HepG2 (cell line): ENCODE measurements at regions of chr16 and their contacts with region 1.

Region 1: DNA sequence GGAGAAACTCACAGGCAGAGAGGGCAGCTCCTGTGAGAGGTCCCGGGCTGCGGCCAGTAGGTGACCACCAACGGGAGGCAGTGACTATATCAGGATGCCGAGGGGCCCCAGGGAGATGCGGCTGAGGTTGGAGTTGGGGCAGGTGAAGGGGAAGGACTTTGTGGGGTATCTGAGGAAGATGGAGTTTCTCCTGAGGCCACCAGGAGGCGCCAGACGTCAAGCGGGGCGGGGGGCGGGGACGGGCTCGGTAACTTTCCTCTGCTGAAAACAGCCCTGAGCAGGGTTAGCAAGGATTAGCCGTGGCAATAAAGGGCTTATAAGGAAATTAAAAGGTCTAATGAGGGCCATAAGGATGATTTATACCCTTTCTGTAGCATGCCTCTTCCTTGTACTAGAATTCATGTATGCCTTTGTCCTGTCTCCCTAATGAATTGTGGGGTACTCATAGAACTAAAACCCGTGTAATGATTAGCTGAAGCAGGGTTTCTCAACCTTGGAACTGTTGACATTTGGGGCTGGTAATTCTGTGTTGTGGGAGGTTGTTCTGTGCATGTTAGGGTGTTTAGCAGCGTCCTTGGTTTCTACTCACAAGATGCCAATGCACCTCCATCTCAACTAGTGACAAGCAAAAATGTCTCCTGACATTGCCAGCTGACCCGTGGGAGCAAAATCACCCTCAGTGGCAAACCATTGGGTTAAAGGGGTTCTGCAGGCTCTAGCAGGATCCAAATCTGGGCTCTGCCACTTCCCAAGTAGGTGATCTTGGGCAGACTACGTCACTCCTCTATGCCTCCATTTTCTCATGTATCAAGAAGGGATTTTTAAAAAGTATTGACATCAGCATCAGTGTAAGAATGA is 74.8 kb upstream of the GRIN2A start:
- DNase-seq: peak; percentile 91
- ATAC-seq: peak; percentile 93
- H3K4me3 ChIP-seq: peak overlapping the region; percentile 41 to 66 (median 52)
- H3K27ac ChIP-seq: peak overlapping the region; percentile 83
- H3K4me1 ChIP-seq: peaks cover 51% of the 10 kb centered on the region
- H3K27me3 ChIP-seq: no peaks in the 10 kb centered on the region
- CTCF ChIP-seq: peak; percentile 92
- EP300 ChIP-seq: peak; percentile 22 to 86; a peak in 3 of 4 replicates
- POLR2A ChIP-seq: peak in 1 of 2 experiments; percentile 17; a peak in 1 of 4 replicates
- RAD21 ChIP-seq: peak; percentile 98

Region 2: GRCh38 chr16:10308305-10309193 is 51.5 kb after region 1 on chr16:
- CTCF ChIA-PET with region 1: no interaction called
- POLR2A ChIA-PET with region 1: interaction called, 12 read pairs
- in situ Hi-C with region 1: loop called (anchors 5 kb)
- intact Hi-C with region 1: no loop called
- DNase-seq: peak; percentile 61
- ATAC-seq: no peak
- H3K4me3 ChIP-seq: no peak overlapping the region
- H3K27ac ChIP-seq: peak overlapping the region; percentile 44
- H3K4me1 ChIP-seq: peaks cover 67% of the 10 kb centered on the region
- H3K27me3 ChIP-seq: no peaks in the 10 kb centered on the region
- CTCF ChIP-seq: peak; percentile 14; the same call in 1 of the 2 replicates
- EP300 ChIP-seq: peak in 1 of 2 experiments; percentile 87; a peak in 3 of 4 replicates
- POLR2A ChIP-seq: no peak
- RAD21 ChIP-seq: no peak

Region 3: GRCh38 chr16:10314811-10315210 is 57.8 kb after region 1 on chr16:
- CTCF ChIA-PET with region 1: interaction called, 3 read pairs
- POLR2A ChIA-PET with region 1: interaction called, 5 read pairs
- in situ Hi-C with region 1: loop called (anchors 5 kb)
- intact Hi-C with region 1: loop called (anchors 1 kb)
- DNase-seq: peak; percentile 65
- ATAC-seq: no peak
- H3K4me3 ChIP-seq: no peak overlapping the region
- H3K27ac ChIP-seq: no peak overlapping the region
- H3K4me1 ChIP-seq: peaks cover 73% of the 10 kb centered on the region
- H3K27me3 ChIP-seq: no peaks in the 10 kb centered on the region
- CTCF ChIP-seq: peak; percentile 80
- EP300 ChIP-seq: no peak
- POLR2A ChIP-seq: no peak
- RAD21 ChIP-seq: peak; percentile 74

Region 4: DNA sequence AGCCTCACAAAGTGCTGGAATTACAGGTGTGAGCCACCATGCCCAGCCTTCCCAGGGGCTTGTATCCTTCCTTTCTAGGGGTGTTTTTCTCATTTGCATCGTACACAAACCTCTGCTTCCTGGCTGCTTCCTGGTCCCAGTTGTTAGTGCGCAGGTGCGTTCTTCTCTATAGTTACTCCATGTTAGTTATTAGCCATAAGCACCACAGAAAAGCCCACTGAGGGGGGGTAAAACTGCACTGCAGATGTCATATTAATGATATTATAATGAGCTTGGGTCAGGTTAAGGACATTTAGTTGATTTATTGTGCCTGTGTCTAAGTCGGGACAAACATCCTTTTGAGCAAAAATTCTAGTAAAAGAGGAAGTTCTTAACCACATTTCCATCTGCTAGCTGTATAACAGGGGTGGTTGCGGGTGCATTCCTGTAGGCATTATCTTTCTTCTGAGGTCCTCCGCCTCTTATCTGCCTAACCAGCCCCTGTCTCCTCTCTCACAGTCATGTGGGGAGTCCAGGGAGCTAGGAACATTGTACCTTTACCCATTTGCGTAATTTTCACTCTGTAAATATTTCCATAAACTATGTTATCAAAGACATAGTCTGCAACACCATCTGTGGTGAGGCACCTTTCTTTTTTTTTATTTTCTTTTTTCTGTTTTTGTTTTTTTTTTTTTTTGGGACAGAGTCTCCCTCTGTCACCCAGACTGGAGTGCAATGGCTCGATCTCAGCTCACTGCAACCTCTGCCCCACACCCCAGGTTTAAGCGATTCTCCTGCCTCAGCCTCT is 105.3 kb after region 1 on chr16:
- CTCF ChIA-PET with region 1: no interaction called
- POLR2A ChIA-PET with region 1: interaction called, 3 read pairs
- in situ Hi-C with region 1: no loop called
- intact Hi-C with region 1: loop called (anchors 2 kb)
- DNase-seq: peak; percentile 98
- ATAC-seq: peak; percentile 97
- H3K4me3 ChIP-seq: peak overlapping the region in 1 of 3 experiments; percentile 27; a peak in 1 of 6 replicates
- H3K27ac ChIP-seq: peak overlapping the region; percentile 75
- H3K4me1 ChIP-seq: peaks cover 75% of the 10 kb centered on the region
- H3K27me3 ChIP-seq: no peaks in the 10 kb centered on the region
- CTCF ChIP-seq: peak; percentile 14; the same call in 1 of the 2 replicates
- EP300 ChIP-seq: peak in 1 of 2 experiments; percentile 95; a peak in 3 of 4 replicates
- POLR2A ChIP-seq: no peak
- RAD21 ChIP-seq: no peak

Region 5: DNA sequence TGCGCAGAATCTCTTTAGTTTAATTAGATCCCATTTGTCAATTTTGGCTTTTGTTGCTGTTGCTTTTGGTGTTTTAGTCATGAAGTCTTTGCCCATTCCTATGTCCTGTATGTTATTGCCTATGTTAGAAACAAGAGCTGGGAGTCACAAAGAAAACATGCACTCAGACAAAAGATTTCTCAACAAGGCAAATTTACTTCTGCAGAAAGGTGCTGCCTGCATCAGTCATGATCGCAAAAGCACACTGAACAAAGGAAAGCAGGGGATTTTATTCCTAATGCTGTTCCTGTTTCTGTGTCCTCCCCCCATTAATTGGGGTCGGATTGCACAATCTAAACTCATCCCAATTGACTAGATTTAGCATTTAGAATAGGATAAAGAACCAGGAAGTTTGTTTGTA is 184.7 kb after region 1 on chr16:
- CTCF ChIA-PET with region 1: no interaction called
- POLR2A ChIA-PET with region 1: no interaction called
- in situ Hi-C with region 1: no loop called
- intact Hi-C with region 1: loop called (anchors 5 kb)
- DNase-seq: no peak
- ATAC-seq: no peak
- H3K4me3 ChIP-seq: no peak overlapping the region
- H3K27ac ChIP-seq: no peak overlapping the region
- H3K4me1 ChIP-seq: no peaks in the 10 kb centered on the region
- H3K27me3 ChIP-seq: no peaks in the 10 kb centered on the region
- CTCF ChIP-seq: no peak
- EP300 ChIP-seq: no peak
- POLR2A ChIP-seq: no peak
- RAD21 ChIP-seq: no peak

Region 6: DNA sequence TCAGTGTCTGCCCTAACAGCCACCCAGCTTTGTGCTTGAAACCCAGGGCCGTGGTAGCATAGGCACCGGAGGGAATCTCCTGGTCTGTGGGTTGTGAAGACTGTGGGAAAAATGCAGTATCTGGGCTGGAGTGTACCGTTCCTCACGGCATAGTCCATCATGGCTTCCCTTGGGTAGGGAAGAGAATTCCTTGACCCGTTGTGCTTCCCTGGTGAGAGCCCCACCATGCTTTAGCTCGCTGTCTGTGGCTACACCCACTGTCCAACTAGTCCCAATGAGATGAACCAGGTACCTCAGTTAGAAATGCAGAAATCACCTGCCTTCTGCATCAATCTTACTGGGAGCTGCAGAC is 196.1 kb after region 1 on chr16:
- CTCF ChIA-PET with region 1: no interaction called
- POLR2A ChIA-PET with region 1: interaction called, 10 read pairs
- in situ Hi-C with region 1: no loop called
- intact Hi-C with region 1: no loop called
- DNase-seq: no peak
- ATAC-seq: peak; percentile 39
- H3K4me3 ChIP-seq: peak overlapping the region in 2 of 3 experiments; percentile 25 to 47; a peak in 3 of 6 replicates
- H3K27ac ChIP-seq: peak overlapping the region; percentile 80
- H3K4me1 ChIP-seq: peaks cover 32% of the 10 kb centered on the region
- H3K27me3 ChIP-seq: no peaks in the 10 kb centered on the region
- CTCF ChIP-seq: no peak
- EP300 ChIP-seq: no peak
- POLR2A ChIP-seq: no peak
- RAD21 ChIP-seq: no peak

Region 7: GRCh38 chr16:10509534-10510025 is 252.6 kb after region 1 on chr16:
- CTCF ChIA-PET with region 1: interaction called, 87 read pairs
- POLR2A ChIA-PET with region 1: interaction called, 6 read pairs
- in situ Hi-C with region 1: loop called (anchors 5 kb)
- intact Hi-C with region 1: loop called (anchors 1 kb)
- DNase-seq: peak; percentile 91
- ATAC-seq: peak; percentile 97
- H3K4me3 ChIP-seq: no peak overlapping the region
- H3K27ac ChIP-seq: no peak overlapping the region
- H3K4me1 ChIP-seq: peaks cover 24% of the 10 kb centered on the region
- H3K27me3 ChIP-seq: no peaks in the 10 kb centered on the region; a peak in 1 of 5 replicates
- CTCF ChIP-seq: peak; percentile 100
- EP300 ChIP-seq: no peak
- POLR2A ChIP-seq: no peak
- RAD21 ChIP-seq: peak; percentile 98